ENCODE measurements at regions of chr2 and their contacts with region 1.

Region 1: GRCh38 chr2:134118279-134119116 is 135.4 kb upstream of the MGAT5 start:
- DNase-seq: peak; percentile 92
- H3K4me3 ChIP-seq: no peak overlapping the region
- H3K27ac ChIP-seq: peak overlapping the region; percentile 43
- H3K4me1 ChIP-seq: peaks cover 25% of the 10 kb centered on the region
- H3K27me3 ChIP-seq: peaks cover 0 to 3% of the 10 kb centered on the region in 2 experiments
- CTCF ChIP-seq: peak; percentile 64 to 69
- POLR2A ChIP-seq: no peak

Region 2: DNA sequence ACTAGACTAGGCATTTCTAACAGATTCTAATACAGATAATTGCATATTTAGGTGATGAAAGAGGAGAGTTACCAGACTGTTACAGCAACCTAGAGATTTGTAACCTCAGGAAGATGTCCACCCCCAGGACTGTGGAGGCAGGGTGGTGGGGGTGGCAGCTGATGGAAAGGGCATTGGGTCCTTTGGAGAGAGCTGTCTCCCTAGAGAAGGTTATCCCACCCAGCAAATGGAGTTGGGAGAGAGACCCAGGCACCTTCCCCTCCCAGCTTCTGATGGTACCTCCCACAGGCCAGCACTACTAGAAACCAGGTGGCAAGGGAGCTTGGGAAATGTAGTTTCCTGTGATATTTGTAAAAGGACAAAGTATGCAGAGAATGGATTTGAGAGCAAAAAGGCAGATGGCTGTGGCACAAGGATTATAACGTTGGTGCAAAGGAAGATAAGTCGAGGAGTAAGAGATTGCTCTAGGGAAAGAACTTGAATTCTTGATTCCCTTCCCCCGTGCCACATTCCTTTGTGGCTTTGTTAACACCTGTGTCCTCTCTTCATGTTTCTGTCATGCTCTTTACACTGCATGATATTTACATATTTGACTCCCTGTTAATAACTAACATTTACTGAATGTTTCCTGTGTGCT is 59.9 kb after region 1 on chr2:
- CTCF ChIA-PET with region 1: interaction called, 8 read pairs
- POLR2A ChIA-PET with region 1: no interaction called
- dilution Hi-C with region 1: no loop called
- intact Hi-C with region 1: loop called (anchors 1 kb)
- DNase-seq: peak; percentile 10
- H3K4me3 ChIP-seq: no peak overlapping the region
- H3K27ac ChIP-seq: peak overlapping the region; percentile 79
- H3K4me1 ChIP-seq: peaks cover 35% of the 10 kb centered on the region
- H3K27me3 ChIP-seq: no peaks in the 10 kb centered on the region
- CTCF ChIP-seq: no peak
- POLR2A ChIP-seq: no peak

Region 3: DNA sequence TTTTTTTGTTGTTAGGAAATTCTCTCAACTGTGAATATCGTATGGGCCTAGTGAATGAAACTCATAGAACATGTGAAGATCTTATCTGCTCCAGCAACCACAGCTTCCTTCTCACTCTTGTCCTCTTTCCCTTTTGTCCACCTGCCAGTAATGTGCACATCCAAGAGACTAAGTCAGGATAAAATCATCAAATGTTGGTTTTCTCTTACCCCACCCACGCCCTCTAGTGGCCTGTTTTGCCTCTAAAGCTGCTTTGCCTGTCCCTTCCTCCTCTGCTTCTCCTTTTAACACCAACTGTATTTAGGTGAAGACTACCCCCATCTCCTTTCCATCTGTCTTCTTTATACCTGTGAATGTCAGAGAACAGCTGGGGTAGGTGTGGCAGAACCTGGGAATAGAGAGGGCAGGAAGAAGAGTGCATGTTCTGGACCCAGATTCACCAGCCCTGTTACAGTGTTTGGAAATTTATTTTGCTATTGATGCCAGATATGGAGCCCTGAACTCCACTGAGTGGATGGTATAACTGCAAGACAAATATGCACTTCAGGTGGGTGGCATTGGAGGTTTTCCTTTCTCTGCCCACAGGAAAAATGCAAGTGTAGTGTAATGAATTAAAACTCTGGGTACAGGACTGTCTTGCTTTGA is 127.0 kb after region 1 on chr2:
- CTCF ChIA-PET with region 1: interaction called, 69 read pairs
- POLR2A ChIA-PET with region 1: interaction called, 3 read pairs
- dilution Hi-C with region 1: no loop called
- intact Hi-C with region 1: loop called (anchors 1 kb)
- DNase-seq: peak; percentile 57
- H3K4me3 ChIP-seq: no peak overlapping the region
- H3K27ac ChIP-seq: no peak overlapping the region
- H3K4me1 ChIP-seq: peaks cover 14% of the 10 kb centered on the region
- H3K27me3 ChIP-seq: no peaks in the 10 kb centered on the region
- CTCF ChIP-seq: peak; percentile 76
- POLR2A ChIP-seq: no peak

Region 4: GRCh38 chr2:134348239-134348638 is 229.7 kb after region 1 on chr2:
- CTCF ChIA-PET with region 1: interaction called, 11 read pairs
- POLR2A ChIA-PET with region 1: no interaction called
- dilution Hi-C with region 1: no loop called
- intact Hi-C with region 1: no loop called
- DNase-seq: peak; percentile 8
- H3K4me3 ChIP-seq: no peak overlapping the region
- H3K27ac ChIP-seq: no peak overlapping the region
- H3K4me1 ChIP-seq: peaks cover 8% of the 10 kb centered on the region
- H3K27me3 ChIP-seq: no peaks in the 10 kb centered on the region
- CTCF ChIP-seq: no peak
- POLR2A ChIP-seq: no peak

Region 5: DNA sequence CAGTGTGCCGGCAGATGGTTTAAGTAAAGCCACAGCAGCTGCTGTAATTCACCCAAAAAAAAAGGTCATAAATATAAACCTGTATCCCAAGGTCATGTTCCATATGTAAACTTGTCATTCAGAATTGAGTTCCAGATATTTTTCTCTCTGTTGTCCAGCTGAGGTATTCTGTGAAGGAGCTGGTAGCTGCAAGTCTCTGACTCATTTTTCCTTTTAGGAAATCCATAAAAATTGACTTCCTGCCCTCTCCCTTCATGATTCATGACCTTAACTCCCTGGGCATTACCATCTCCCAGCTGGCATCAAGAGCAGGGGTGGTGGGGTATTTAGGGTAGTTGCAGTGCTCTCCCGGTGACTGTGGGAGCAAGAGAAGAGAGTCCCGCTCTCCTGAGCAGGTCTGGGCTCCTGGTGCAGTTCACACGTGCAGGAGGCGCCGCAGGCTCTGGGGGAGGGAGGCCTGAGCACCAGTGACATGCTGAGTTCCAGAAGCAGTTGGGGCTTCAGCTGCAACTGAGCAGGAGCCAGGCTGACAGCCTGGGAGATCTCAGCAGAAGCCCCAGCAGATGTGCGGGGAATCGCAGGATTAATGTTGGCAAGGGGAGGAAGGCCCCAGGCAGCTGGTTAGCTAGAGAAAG is 328.0 kb after region 1 on chr2:
- CTCF ChIA-PET with region 1: interaction called, 157 read pairs
- POLR2A ChIA-PET with region 1: no interaction called
- dilution Hi-C with region 1: no loop called
- intact Hi-C with region 1: loop called (anchors 1 kb)
- DNase-seq: peak; percentile 90
- H3K4me3 ChIP-seq: no peak overlapping the region
- H3K27ac ChIP-seq: peak overlapping the region; percentile 45
- H3K4me1 ChIP-seq: peaks cover 43% of the 10 kb centered on the region
- H3K27me3 ChIP-seq: no peaks in the 10 kb centered on the region
- CTCF ChIP-seq: no peak
- POLR2A ChIP-seq: peak; percentile 33